ENCODE measurements at regions of chr14 and their contacts with region 1.

Region 1: DNA sequence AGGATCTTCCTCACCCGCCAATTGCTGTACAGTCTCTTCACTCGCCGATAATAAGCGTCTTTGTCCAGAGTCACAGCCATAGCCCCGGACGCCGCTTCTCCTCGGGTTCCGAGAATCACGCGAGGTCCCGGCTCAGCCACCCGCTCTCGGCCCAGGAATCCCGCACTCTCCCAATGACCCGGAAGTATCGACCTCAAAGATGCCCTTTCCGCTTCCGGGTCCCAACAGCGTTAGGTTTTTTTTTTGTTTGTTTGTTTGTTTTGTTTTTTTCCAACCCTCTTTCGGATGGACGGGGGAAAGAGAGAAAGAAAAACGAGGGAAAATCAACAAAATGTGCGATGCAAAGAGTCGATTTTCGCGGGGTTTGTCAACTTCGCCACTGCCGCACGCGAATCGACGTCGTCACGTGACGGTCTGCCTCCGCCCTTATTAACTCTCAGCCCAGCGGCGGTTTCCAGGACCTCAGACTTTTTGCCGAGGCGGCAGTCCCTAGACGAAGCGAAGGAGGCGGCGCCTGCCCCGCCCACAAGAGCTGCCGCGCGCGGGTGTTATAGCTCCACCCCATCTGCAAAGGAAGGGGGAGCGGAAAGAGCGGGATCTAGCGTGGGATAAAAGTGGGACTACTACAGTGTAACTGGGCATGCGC is at the start of gene SUPT16H:
- DNase-seq: peak; percentile 97
- ATAC-seq: peak; percentile 96
- total RNA-seq, gene SUPT16H: 38.1 to 39.8 TPM

Region 2: DNA sequence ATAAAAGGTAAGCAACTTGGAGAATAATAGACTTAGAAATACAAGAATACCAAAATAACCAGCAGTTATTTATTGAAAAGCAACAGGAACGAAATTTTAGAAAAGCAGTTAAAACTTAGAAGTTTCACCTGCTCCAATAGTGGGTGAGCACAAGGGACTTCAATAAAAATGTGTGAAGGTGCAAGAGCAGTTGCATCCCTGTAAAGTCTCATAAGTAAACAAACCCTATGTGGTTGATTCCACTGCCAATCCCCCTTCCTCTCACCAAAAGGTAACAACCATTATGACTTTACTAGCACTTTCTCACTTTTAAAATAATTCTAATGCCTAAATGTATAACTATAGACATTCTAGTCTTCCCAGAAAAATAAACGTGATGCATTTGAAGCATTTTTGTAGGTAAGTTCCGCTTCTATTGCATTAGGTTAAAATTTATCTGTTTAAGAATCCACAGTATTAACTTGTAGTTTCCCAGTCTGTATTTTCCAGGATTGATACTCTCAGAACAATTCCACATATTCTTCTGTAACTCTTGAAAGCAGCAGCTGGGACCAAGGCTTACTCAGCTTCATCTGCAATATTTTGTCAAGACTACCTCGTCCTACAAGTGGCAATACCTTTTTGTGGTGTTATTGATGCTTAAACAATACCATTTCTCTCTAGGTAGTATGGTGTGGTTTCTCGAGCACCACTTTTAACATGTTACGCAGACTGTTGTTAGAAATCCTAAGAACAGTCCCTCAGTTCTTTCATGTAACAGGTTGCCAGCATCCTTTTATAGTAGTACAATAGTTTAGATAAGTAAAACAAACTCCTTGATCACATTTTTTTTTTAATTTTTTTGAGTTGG is 146.8 kb before region 1 on chr14:
- intact Hi-C with region 1: loop called in 1 of 2 experiments (anchors 5 kb)
- DNase-seq: no peak
- ATAC-seq: no peak

Region 3: GRCh38 chr14:21298358-21298757 is 85.6 kb before region 1 on chr14:
- intact Hi-C with region 1: no loop called
- DNase-seq: no peak
- ATAC-seq: no peak

Region 4: DNA sequence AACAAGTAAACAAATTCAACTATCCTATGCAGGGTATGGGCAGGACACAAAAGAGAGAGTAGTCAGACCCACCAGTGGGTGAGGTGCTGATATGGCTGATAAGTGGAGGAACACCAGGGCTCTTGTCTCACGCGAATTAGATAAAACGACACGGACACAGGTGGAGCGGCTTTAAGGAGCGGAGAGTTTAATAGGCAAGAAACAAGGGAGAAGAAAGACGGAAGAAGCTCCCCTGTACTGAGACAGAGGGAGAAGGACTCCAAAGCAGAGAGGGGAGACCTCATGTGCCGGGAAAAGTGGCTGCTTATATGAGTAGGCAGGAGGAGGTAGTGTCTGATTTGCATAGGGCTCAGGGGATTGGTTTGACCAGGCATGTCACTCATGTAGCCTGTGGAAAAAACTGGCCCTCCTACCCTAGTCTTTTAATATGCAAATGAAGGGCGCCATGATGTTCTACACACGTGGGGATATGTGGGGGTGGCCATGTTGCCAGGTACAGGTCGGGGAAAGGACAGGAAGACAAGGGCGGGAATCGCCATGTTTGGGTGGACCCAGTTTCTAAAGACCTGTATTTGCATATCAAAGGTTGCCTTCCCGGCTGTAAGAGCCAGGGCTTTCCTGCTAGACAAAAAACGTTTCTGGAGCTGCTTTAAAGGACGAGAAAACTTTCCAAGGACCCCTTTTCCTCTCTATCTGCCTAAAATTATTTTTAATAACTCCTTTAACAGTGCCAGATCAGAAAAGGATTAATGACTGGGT is 75.3 kb before region 1 on chr14:
- intact Hi-C with region 1: no loop called
- DNase-seq: peak; percentile 82 to 94
- ATAC-seq: peak; percentile 89

Region 5: DNA sequence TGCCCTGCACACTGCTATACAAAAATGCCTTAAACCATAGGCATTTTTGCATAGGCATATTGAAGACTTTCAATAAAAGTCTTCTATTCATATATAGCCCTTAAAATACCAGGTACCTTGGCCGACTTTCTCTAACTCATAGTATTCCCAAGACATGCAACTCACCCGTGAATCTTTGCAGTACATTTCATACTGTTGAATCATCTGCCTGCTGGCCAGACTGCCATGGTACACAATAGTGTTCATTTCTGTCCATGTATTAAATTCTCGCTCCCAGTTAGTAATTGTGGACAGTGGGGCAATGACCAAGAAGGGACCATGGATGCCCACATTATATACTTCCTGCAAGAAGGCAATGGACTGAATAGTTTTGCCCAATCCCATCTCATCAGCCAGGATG is 24.2 kb after region 1 on chr14:
- intact Hi-C with region 1: no loop called
- DNase-seq: no peak
- ATAC-seq: no peak

Region 6: DNA sequence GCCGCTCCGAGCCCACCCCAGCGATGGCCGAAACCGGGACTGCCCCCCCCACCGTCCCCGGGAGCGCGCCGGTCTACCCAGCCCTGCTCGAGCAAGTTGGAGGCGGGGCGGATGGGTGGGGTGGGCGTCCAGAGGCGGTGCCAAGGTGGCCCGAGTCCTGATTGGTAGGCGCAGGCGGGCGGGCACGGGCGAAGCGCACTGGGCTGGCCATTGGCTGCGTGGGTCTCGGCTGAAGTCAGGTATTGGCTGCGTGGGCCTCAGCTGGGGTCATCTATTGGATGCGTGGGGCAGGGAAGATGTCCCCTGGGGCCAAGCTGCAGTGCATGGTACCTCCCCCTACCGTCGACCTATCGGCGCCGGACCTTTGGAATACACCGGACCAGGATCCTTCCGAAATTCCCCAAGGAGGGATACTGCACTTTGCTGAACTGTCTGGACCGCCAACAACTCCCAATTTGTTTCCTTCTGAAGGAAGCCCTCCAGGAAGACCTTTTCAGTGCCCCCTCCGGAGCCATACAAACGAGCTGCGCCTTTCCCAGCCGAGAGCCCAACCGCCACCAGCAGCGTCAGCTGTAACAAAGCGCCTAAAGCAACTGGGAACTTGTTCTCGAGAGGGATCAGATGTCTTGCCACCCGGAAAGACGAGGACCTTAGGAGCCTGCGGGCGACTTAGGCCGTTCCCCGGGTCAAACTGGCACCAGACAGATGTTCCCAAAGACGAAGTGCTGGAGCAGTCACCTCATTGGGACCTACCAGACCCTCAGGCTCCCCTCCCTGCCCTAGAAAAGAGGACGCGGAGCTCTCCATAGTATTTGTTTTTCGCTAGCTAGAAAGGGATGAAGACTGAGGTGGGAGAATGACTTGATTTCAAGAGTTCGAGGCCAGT is 1902.3 kb after region 1 on chr14 and contains the start of gene HOMEZ:
- intact Hi-C with region 1: loop called in 1 of 2 experiments (anchors 10 kb)
- DNase-seq: peak; percentile 99 to 100
- ATAC-seq: peak; percentile 96
- total RNA-seq, gene HOMEZ: 15.3 to 17.6 TPM

Measured in left colon (tissue), 2 donors.